ENCODE measurements at regions of chr7 and their contacts with region 1.

Region 1: DNA sequence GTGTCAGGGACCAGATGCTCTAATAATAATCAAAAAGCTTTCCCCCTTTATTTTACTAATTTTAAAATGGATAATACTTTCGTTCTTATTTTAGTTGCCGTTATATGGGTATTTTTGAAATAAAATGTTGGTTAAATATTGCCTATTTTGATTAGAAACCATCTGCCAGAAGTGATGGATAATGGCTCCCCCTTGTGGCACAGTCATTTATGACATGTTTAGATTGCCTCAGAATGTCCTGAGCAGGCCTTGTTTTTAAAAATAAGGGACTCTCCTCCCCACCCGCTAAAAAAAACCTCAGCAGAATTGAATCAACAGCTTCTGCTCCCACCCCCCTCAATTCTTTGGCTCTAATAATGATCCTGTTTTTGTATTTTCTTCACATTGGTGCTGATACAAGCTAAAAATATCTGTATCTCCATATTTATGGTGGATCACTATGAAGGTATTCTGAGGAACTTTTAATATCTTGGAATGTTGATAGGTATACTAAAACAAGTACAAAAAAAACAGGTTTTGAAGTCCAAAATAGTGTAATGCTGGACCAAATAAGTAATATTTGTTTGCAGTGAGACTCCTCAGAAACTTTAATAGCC is 38.8 kb downstream of the TMEM60 start:
- DNase-seq: peak; percentile 82
- ATAC-seq: peak; percentile 71
- H3K4me3 ChIP-seq: no peak overlapping the region
- H3K4me3 Mint-ChIP-seq: no peak overlapping the region
- H3K27ac ChIP-seq: peak overlapping the region in 1 of 2 donors; percentile 59
- H3K27ac Mint-ChIP-seq: peak overlapping the region; percentile 1
- H3K4me1 ChIP-seq: peaks cover 17 to 21% of the 10 kb centered on the region in 2 donors
- H3K4me1 Mint-ChIP-seq: peaks cover 58% of the 10 kb centered on the region
- H3K27me3 ChIP-seq: no peaks in the 10 kb centered on the region
- H3K27me3 Mint-ChIP-seq: no peaks in the 10 kb centered on the region
- CTCF ChIP-seq: peak; percentile 95

Region 2: DNA sequence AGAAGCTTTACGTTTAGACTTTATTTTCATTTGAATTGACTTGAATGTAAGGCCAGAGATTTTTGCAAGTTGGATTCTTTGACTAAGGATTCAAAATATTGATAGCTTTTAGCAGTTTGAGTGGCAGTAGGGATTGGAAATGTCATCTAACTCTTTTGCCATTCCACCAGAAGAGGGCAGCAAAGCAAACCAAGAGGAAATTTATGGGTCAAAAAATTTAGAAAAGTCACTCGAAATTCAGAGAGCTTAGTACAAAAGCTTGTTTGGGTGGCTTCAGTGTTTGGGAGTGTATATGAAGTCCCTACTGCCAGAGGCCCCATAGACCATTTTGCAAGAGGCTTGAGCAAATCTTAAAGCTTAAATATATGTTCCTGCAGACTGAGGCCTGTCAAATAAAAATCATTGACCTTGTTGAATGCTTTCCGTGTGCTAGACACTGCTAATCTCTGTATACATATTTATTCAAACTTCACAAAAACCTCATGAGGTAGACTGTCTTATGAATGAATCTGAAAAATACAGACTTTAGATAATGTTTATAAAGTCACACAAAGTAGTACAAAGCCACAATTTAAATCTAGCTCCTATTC is 107.7 kb before region 1 on chr7:
- CTCF ChIA-PET with region 1: interaction called, 155 read pairs
- POLR2A ChIA-PET with region 1: no interaction called
- intact Hi-C with region 1: loop called (anchors 1 kb)
- DNase-seq: peak; percentile 62
- ATAC-seq: no peak
- H3K4me3 ChIP-seq: no peak overlapping the region
- H3K4me3 Mint-ChIP-seq: no peak overlapping the region
- H3K27ac ChIP-seq: no peak overlapping the region
- H3K27ac Mint-ChIP-seq: no peak overlapping the region
- H3K4me1 ChIP-seq: no peaks in the 10 kb centered on the region
- H3K4me1 Mint-ChIP-seq: no peaks in the 10 kb centered on the region
- H3K27me3 ChIP-seq: no peaks in the 10 kb centered on the region
- H3K27me3 Mint-ChIP-seq: no peaks in the 10 kb centered on the region
- CTCF ChIP-seq: peak; percentile 89

Region 3: GRCh38 chr7:77674878-77675277 is 84.5 kb before region 1 on chr7:
- CTCF ChIA-PET with region 1: interaction called, 10 read pairs
- POLR2A ChIA-PET with region 1: no interaction called
- intact Hi-C with region 1: no loop called
- DNase-seq: no peak
- ATAC-seq: no peak
- H3K4me3 ChIP-seq: no peak overlapping the region
- H3K4me3 Mint-ChIP-seq: no peak overlapping the region
- H3K27ac ChIP-seq: no peak overlapping the region
- H3K27ac Mint-ChIP-seq: no peak overlapping the region
- H3K4me1 ChIP-seq: no peaks in the 10 kb centered on the region
- H3K4me1 Mint-ChIP-seq: no peaks in the 10 kb centered on the region
- H3K27me3 ChIP-seq: no peaks in the 10 kb centered on the region
- H3K27me3 Mint-ChIP-seq: no peaks in the 10 kb centered on the region
- CTCF ChIP-seq: no peak

Region 4: GRCh38 chr7:77716804-77717203 is 42.6 kb before region 1 on chr7:
- CTCF ChIA-PET with region 1: interaction called, 7 read pairs
- POLR2A ChIA-PET with region 1: no interaction called
- intact Hi-C with region 1: loop called (anchors 5 kb)
- DNase-seq: no peak
- ATAC-seq: no peak
- H3K4me3 ChIP-seq: no peak overlapping the region
- H3K4me3 Mint-ChIP-seq: no peak overlapping the region
- H3K27ac ChIP-seq: no peak overlapping the region
- H3K27ac Mint-ChIP-seq: no peak overlapping the region
- H3K4me1 ChIP-seq: no peaks in the 10 kb centered on the region
- H3K4me1 Mint-ChIP-seq: peaks cover 30% of the 10 kb centered on the region
- H3K27me3 ChIP-seq: no peaks in the 10 kb centered on the region
- H3K27me3 Mint-ChIP-seq: no peaks in the 10 kb centered on the region
- CTCF ChIP-seq: no peak

Region 5: DNA sequence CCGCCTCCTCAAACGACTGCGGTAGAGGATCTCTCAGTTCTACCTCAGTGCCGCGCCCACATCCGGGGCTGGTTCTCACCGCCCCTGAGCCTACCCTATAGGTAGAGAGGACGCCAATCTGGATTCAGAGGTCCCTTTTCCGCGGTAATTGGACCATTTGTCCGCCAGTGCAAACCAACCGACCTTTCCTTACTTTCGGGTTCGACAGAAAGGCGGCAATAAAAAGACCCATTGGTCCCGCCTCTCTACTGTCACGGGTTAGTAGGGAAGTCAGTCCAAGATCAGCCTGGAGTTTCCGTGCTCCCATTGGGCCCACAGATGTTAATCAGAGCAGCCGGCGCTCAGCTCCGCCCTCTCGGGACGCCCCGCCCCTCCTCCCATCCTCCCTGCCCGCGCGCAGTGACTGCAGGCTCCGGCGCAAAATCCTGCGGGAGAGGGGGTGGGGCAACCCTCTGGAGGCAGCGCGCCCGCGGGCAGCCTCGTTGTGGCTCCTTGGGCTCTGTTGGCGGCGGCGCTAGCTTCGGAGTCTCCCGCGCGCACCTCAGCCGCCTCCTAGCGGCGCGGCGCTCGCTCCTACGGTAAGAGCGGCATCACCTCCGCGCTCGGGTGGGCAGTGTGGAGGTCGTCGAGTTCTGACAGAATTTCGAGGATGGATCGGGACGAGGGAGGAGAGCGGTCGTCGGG is 39.1 kb after region 1 on chr7 and contains the starts of genes PHTF2 and TMEM60:
- CTCF ChIA-PET with region 1: interaction called, 6 read pairs
- POLR2A ChIA-PET with region 1: no interaction called
- intact Hi-C with region 1: loop called (anchors 5 kb)
- DNase-seq: peak; percentile 97
- ATAC-seq: peak; percentile 86
- H3K4me3 ChIP-seq: peak within 1 kb of the TSS; percentile 79 to 97 (median 91)
- H3K4me3 Mint-ChIP-seq: peak within 1 kb of the TSS; percentile 91
- H3K27ac ChIP-seq: peak within 1 kb of the TSS; percentile 77 to 87
- H3K27ac Mint-ChIP-seq: peak within 1 kb of the TSS; percentile 92
- H3K4me1 ChIP-seq: peaks cover 46 to 49% of the 10 kb centered on the region in 2 donors
- H3K4me1 Mint-ChIP-seq: peaks cover 79% of the 10 kb centered on the region
- H3K27me3 ChIP-seq: no peaks in the 10 kb centered on the region
- H3K27me3 Mint-ChIP-seq: no peaks in the 10 kb centered on the region
- CTCF ChIP-seq: peak; percentile 74
- total RNA-seq, gene PHTF2: 44.8 and 49.6 TPM in 2 replicates
- total RNA-seq, gene TMEM60: 18.9 and 20.4 TPM in 2 replicates

Region 6: GRCh38 chr7:77940647-77941046 is 181.3 kb after region 1 on chr7:
- CTCF ChIA-PET with region 1: interaction called, 12 read pairs
- POLR2A ChIA-PET with region 1: no interaction called
- intact Hi-C with region 1: no loop called
- DNase-seq: peak; percentile 15
- ATAC-seq: no peak
- H3K4me3 ChIP-seq: no peak overlapping the region
- H3K4me3 Mint-ChIP-seq: no peak overlapping the region
- H3K27ac ChIP-seq: no peak overlapping the region
- H3K27ac Mint-ChIP-seq: no peak overlapping the region
- H3K4me1 ChIP-seq: peaks cover under 1 to 3% of the 10 kb centered on the region in 2 donors
- H3K4me1 Mint-ChIP-seq: peaks cover 14% of the 10 kb centered on the region
- H3K27me3 ChIP-seq: no peaks in the 10 kb centered on the region
- H3K27me3 Mint-ChIP-seq: no peaks in the 10 kb centered on the region
- CTCF ChIP-seq: peak; percentile 73

Measured in B cell (primary cell).